ENCODE measurements at regions of chr1 and their contacts with region 1.

Region 1: GRCh38 chr1:204475656-204476432 is 18.8 kb downstream of the PIK3C2B start:
- DNase-seq: no peak
- H3K4me3 ChIP-seq: no peak overlapping the region
- H3K27ac ChIP-seq: no peak overlapping the region
- H3K4me1 ChIP-seq: peaks cover 17% of the 10 kb centered on the region
- H3K27me3 ChIP-seq: no peaks in the 10 kb centered on the region
- CTCF ChIP-seq: no peak

Region 2: DNA sequence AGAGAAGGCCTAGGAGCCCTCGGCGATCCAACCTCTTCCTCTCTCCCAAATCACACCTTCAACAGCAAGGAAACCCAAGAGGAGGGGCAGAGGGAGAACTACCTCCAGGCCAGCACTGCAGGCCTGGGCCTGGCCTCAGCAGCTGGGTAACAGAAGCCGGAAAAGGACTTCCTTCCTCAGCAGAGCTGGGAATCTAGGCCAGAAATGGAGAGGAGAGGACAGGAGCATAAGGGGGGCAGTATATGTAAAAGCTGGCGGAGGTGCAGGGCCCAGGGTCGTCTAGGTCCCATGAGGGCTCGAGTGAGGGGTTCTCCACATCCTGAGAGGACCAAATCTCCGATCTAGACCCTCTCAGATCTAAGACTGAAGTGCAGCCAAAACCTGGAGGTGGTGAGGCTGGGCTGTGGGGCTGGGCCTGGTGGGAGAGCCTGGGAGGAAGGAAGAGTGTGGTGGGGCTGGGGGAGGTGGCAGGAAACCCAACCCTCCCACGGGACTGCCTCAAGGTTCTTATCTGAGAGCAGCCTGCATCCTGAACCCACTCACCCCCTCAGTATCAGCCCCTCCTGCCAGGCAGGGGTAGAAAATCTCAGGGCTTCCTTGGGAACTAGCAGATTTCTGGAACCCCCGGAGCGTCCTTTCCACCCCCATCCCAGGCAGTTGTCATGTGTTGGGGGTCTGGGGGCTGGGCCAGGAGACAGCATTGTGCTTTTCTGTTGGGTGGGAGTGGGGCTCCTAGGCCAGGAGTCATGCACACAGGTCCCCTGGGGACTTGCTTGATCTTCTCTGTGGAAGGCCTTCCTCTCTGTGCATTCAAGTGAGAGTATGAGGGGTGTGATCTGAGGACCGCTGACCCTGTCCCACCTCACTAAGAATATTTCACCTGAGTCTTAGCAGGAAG is 14.3 kb before region 1 on chr1:
- intact Hi-C with region 1: loop called (anchors 2 kb)
- DNase-seq: peak; percentile 36
- H3K4me3 ChIP-seq: no peak overlapping the region
- H3K27ac ChIP-seq: peak overlapping the region; percentile 16
- H3K4me1 ChIP-seq: no peaks in the 10 kb centered on the region
- H3K27me3 ChIP-seq: no peaks in the 10 kb centered on the region
- CTCF ChIP-seq: no peak